K562 (cell line): ENCODE measurements at regions of chr4 and their contacts with region 1.

Region 1: DNA sequence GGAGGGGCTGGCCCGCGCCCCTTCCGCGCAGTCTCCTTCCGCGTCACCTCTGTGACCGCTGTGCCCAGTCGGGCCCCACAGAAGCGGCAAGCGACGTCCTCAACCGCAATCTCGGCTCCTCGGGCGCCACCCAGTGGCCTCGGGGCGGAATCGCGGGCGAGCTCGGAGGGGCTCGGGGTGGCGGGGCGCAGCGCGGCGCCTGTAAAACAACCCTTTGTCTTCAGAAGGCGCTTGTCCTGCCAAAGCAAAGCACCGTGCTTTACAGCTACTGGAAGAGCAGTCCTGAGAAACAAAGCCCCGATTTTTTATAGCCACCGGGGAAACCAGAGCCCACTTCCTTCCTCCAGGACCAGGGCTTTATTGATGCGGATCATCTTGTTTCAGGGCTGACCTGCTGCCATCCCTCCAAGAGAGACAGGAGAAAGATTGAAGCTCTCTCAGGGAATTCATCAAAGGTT is 37.3 kb upstream of the CDKN2AIP start:
- DNase-seq: peak; percentile 78 to 88 (median 80)
- ATAC-seq: peak; percentile 98
- H3K4me3 ChIP-seq: peak overlapping the region; percentile 38
- H3K27ac ChIP-seq: no peak overlapping the region; the same call in 2 of the 3 replicates
- H3K4me1 ChIP-seq: peaks cover 7 to 8% of the 10 kb centered on the region in 2 experiments; a peak in 4 of 5 replicates
- H3K27me3 ChIP-seq: no peaks in the 10 kb centered on the region
- CTCF ChIP-seq: peak; percentile 86 to 92 (median 91)
- EP300 ChIP-seq: no peak; the same call in 1 of the 2 replicates
- POLR2A ChIP-seq: no peak
- RAD21 ChIP-seq: peak; percentile 78 to 85

Region 2: GRCh38 chr4:182843808-182844325 is 563.3 kb before region 1 on chr4:
- CTCF ChIA-PET with region 1: no interaction called
- POLR2A ChIA-PET with region 1: no interaction called
- in situ Hi-C with region 1: no loop called
- intact Hi-C with region 1: no loop called
- DNase-seq: no peak
- ATAC-seq: no peak
- H3K4me3 ChIP-seq: no peak overlapping the region
- H3K27ac ChIP-seq: no peak overlapping the region
- H3K4me1 ChIP-seq: no peaks in the 10 kb centered on the region; a peak in 1 of 5 replicates
- H3K27me3 ChIP-seq: peaks cover 28 to 90% of the 10 kb centered on the region in 2 experiments
- CTCF ChIP-seq: no peak
- EP300 ChIP-seq: no peak
- POLR2A ChIP-seq: no peak
- RAD21 ChIP-seq: no peak

Region 3: GRCh38 chr4:183272384-183272783 is 134.8 kb before region 1 on chr4:
- CTCF ChIA-PET with region 1: no interaction called
- POLR2A ChIA-PET with region 1: no interaction called
- in situ Hi-C with region 1: loop called (anchors 10 kb)
- intact Hi-C with region 1: no loop called
- DNase-seq: no peak
- ATAC-seq: no peak
- H3K4me3 ChIP-seq: no peak overlapping the region
- H3K27ac ChIP-seq: no peak overlapping the region
- H3K4me1 ChIP-seq: no peaks in the 10 kb centered on the region
- H3K27me3 ChIP-seq: no peaks in the 10 kb centered on the region
- CTCF ChIP-seq: no peak
- EP300 ChIP-seq: no peak
- POLR2A ChIP-seq: no peak
- RAD21 ChIP-seq: no peak

Region 4: GRCh38 chr4:183362916-183363542 is 44.1 kb before region 1 on chr4:
- CTCF ChIA-PET with region 1: no interaction called
- POLR2A ChIA-PET with region 1: no interaction called
- in situ Hi-C with region 1: no loop called
- intact Hi-C with region 1: loop called (anchors 2 kb)
- DNase-seq: peak in 1 of 4 experiments; percentile 31
- ATAC-seq: peak; percentile 68
- H3K4me3 ChIP-seq: no peak overlapping the region
- H3K27ac ChIP-seq: no peak overlapping the region
- H3K4me1 ChIP-seq: peaks cover 6 to 12% of the 10 kb centered on the region in 2 experiments; a peak in 3 of 5 replicates
- H3K27me3 ChIP-seq: no peaks in the 10 kb centered on the region
- CTCF ChIP-seq: peak; percentile 33 to 46 (median 40); a peak in 3 of 6 replicates
- EP300 ChIP-seq: no peak
- POLR2A ChIP-seq: no peak
- RAD21 ChIP-seq: peak in 1 of 2 experiments; percentile 26; a peak in 1 of 4 replicates